T-cell (primary cell): ENCODE measurements at regions of chr1 and their contacts with region 1.

Region 1: GRCh38 chr1:113928941-113929749 is at the start of gene HIPK1:
- DNase-seq: peak; percentile 85 to 95 (median 92)
- ATAC-seq: peak; percentile 66 to 78 (median 75)
- H3K4me3 ChIP-seq: peak within 1 kb of the TSS; percentile 93 to 98
- H3K4me3 Mint-ChIP-seq: peak within 1 kb of the TSS; percentile 89 to 97 (median 96)
- H3K27ac ChIP-seq: peak within 1 kb of the TSS; percentile 95
- H3K27ac Mint-ChIP-seq: peak within 1 kb of the TSS; percentile 99
- H3K4me1 ChIP-seq: peaks cover 28 to 34% of the 10 kb centered on the region in 2 experiments
- H3K4me1 Mint-ChIP-seq: peaks cover 52 to 61% (median 54%) of the 10 kb centered on the region in 3 donors
- H3K27me3 ChIP-seq: no peaks in the 10 kb centered on the region
- H3K27me3 Mint-ChIP-seq: no peaks in the 10 kb centered on the region
- total RNA-seq, gene HIPK1: 99.5 to 189 (median 103) TPM

Region 2: GRCh38 chr1:113835642-113836307 is 93.4 kb before region 1 on chr1:
- CTCF ChIA-PET with region 1: interaction called, 5 to 15 read pairs
- POLR2A ChIA-PET with region 1: interaction called, 3 to 5 read pairs
- DNase-seq: peak in 12 of 35 experiments; percentile 7 to 80 (median 23)
- ATAC-seq: no peak
- H3K4me3 ChIP-seq: no peak overlapping the region
- H3K4me3 Mint-ChIP-seq: no peak overlapping the region
- H3K27ac ChIP-seq: no peak overlapping the region
- H3K27ac Mint-ChIP-seq: peak overlapping the region; percentile 31 to 58
- H3K4me1 ChIP-seq: no peaks in the 10 kb centered on the region
- H3K4me1 Mint-ChIP-seq: peaks cover 5 to 7% (median 5%) of the 10 kb centered on the region in 3 donors
- H3K27me3 ChIP-seq: no peaks in the 10 kb centered on the region
- H3K27me3 Mint-ChIP-seq: no peaks in the 10 kb centered on the region

Region 3: GRCh38 chr1:113904674-113905434 is 24.3 kb before region 1 on chr1 and contains the starts of genes AP4B1 and DCLRE1B:
- CTCF ChIA-PET with region 1: interaction called, 3 to 69 read pairs
- POLR2A ChIA-PET with region 1: interaction called, 22 to 110 read pairs
- DNase-seq: peak; percentile 84 to 99 (median 96)
- ATAC-seq: peak; percentile 93 to 94 (median 94)
- H3K4me3 ChIP-seq: peak within 1 kb of the TSS; percentile 73 to 95
- H3K4me3 Mint-ChIP-seq: peak within 1 kb of the TSS; percentile 91 to 98 (median 96)
- H3K27ac ChIP-seq: peak within 1 kb of the TSS; percentile 92
- H3K27ac Mint-ChIP-seq: peak within 1 kb of the TSS; percentile 99
- H3K4me1 ChIP-seq: peaks cover 22 to 29% of the 10 kb centered on the region in 2 experiments
- H3K4me1 Mint-ChIP-seq: peaks cover 44 to 68% (median 57%) of the 10 kb centered on the region in 3 donors
- H3K27me3 ChIP-seq: no peaks in the 10 kb centered on the region
- H3K27me3 Mint-ChIP-seq: no peaks in the 10 kb centered on the region
- total RNA-seq, gene AP4B1: 57.8 to 66.4 (median 61.5) TPM
- total RNA-seq, gene DCLRE1B: 5.6 to 6.1 (median 5.9) TPM

Region 4: GRCh38 chr1:113949007-113949406 is 19.9 kb after region 1 on chr1:
- CTCF ChIA-PET with region 1: interaction called, 7 to 86 read pairs
- POLR2A ChIA-PET with region 1: interaction called, 59 to 221 read pairs
- DNase-seq: peak in 5 of 35 experiments; percentile 13 to 61 (median 20)
- ATAC-seq: no peak
- H3K4me3 ChIP-seq: no peak overlapping the region
- H3K4me3 Mint-ChIP-seq: peak overlapping the region in 1 of 3 donors; percentile 79
- H3K27ac ChIP-seq: peak overlapping the region; percentile 84
- H3K27ac Mint-ChIP-seq: peak overlapping the region; percentile 96 to 99
- H3K4me1 ChIP-seq: peaks cover 46 to 49% of the 10 kb centered on the region in 2 experiments
- H3K4me1 Mint-ChIP-seq: peaks cover 86 to 94% (median 87%) of the 10 kb centered on the region in 3 donors
- H3K27me3 ChIP-seq: no peaks in the 10 kb centered on the region
- H3K27me3 Mint-ChIP-seq: no peaks in the 10 kb centered on the region

Region 5: DNA sequence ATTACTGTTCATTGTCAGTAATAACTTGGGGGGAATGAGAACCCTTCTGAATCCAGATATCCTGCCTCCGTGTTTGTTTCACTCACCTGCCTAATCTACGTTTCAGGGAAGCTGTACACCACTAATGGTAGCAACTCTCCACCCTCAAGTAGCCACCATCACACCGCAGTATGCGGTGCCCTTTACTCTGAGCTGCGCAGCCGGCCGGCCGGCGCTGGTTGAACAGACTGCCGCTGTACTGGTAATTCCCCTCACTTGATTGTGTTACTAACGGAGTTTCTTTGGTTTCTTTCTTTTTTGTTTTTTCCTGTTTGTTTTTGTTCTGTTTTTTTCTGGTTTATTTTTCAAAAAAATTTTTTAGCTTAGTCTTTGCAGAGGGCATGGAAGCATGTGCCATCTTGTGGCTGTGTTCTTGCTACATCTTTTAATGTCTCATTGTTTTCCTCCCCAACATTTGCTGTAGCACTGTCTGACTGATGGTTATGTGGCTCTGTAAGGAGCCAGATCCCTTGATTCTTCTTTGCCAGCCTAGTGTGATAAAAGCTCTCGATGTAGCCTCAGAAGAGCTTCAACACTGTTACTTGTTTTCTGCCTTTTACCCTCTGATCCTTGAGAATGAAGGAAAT is 34.2 kb after region 1 on chr1:
- CTCF ChIA-PET with region 1: interaction called, 3 to 34 read pairs
- POLR2A ChIA-PET with region 1: interaction called, 4 to 21 read pairs
- DNase-seq: peak in 1 of 35 experiments; percentile 46
- ATAC-seq: peak in 1 of 4 experiments; percentile 57
- H3K4me3 ChIP-seq: no peak overlapping the region
- H3K4me3 Mint-ChIP-seq: peak overlapping the region in 2 of 3 donors; percentile 23 to 37
- H3K27ac ChIP-seq: no peak overlapping the region
- H3K27ac Mint-ChIP-seq: peak overlapping the region; percentile 63 to 72
- H3K4me1 ChIP-seq: no peaks in the 10 kb centered on the region
- H3K4me1 Mint-ChIP-seq: peaks cover 13 to 23% (median 13%) of the 10 kb centered on the region in 3 donors
- H3K27me3 ChIP-seq: no peaks in the 10 kb centered on the region
- H3K27me3 Mint-ChIP-seq: no peaks in the 10 kb centered on the region